ENCODE measurements at regions of chr17 and their contacts with region 1.

Region 1: GRCh38 chr17:45976755-45977505 is 22.1 kb upstream of the STH start:
- DNase-seq: no peak
- ATAC-seq: peak in 2 of 4 donors; percentile 11 to 23
- H3K4me3 ChIP-seq: no peak overlapping the region
- H3K27ac ChIP-seq: no peak overlapping the region
- H3K4me1 ChIP-seq: peaks cover 0 to 7% (median 0%) of the 10 kb centered on the region in 12 donors
- H3K27me3 ChIP-seq: no peaks in the 10 kb centered on the region
- CTCF ChIP-seq: no peak
- POLR2A ChIP-seq: no peak

Region 2: GRCh38 chr17:45394913-45395568 is 581.9 kb before region 1 on chr17:
- intact Hi-C with region 1: no loop called
- DNase-seq: peak; percentile 71 to 83 (median 77)
- ATAC-seq: peak; percentile 29 to 71 (median 63)
- H3K4me3 ChIP-seq: peak overlapping the region in 10 of 12 donors; percentile 2 to 42 (median 30)
- H3K27ac ChIP-seq: no peak overlapping the region
- H3K4me1 ChIP-seq: peaks cover 0 to 19% (median 4%) of the 10 kb centered on the region in 12 donors
- H3K27me3 ChIP-seq: no peaks in the 10 kb centered on the region
- CTCF ChIP-seq: peak; percentile 61 to 82 (median 72)
- POLR2A ChIP-seq: no peak

Region 3: GRCh38 chr17:46035112-46035818 is 58.3 kb after region 1 on chr17:
- intact Hi-C with region 1: loop called in 1 of 10 experiments (anchors 10 kb)
- DNase-seq: no peak
- ATAC-seq: no peak
- H3K4me3 ChIP-seq: no peak overlapping the region
- H3K27ac ChIP-seq: no peak overlapping the region
- H3K4me1 ChIP-seq: peaks cover 0 to 22% (median 4%) of the 10 kb centered on the region in 12 donors
- H3K27me3 ChIP-seq: no peaks in the 10 kb centered on the region
- CTCF ChIP-seq: no peak
- POLR2A ChIP-seq: no peak

Region 4: GRCh38 chr17:46056800-46057304 is 79.9 kb after region 1 on chr17:
- intact Hi-C with region 1: no loop called
- DNase-seq: no peak
- ATAC-seq: peak in 2 of 4 donors; percentile 20 to 21
- H3K4me3 ChIP-seq: no peak overlapping the region
- H3K27ac ChIP-seq: peak overlapping the region in 1 of 12 donors; percentile 3
- H3K4me1 ChIP-seq: peaks cover 0 to 28% (median 8%) of the 10 kb centered on the region in 12 donors
- H3K27me3 ChIP-seq: no peaks in the 10 kb centered on the region
- CTCF ChIP-seq: no peak
- POLR2A ChIP-seq: no peak